ENCODE measurements at regions of chr11 and their contacts with region 1.

Region 1: GRCh38 chr11:66438504-66439466 is at the start of gene MRPL11:
- DNase-seq: peak; percentile 74 to 86
- ATAC-seq: peak; percentile 100
- H3K4me3 ChIP-seq: peak within 1 kb of the TSS; percentile 91 to 95 (median 92)
- H3K27ac ChIP-seq: peak within 1 kb of the TSS; percentile 81 to 97 (median 84)
- H3K4me1 ChIP-seq: peaks cover 5 to 14% of the 10 kb centered on the region in 2 donors
- H3K27me3 ChIP-seq: no peaks in the 10 kb centered on the region
- CTCF ChIP-seq: peak; percentile 35 to 70 (median 57)
- POLR2A ChIP-seq: no peak
- total RNA-seq, gene MRPL11: 35.1 to 64.1 (median 52.5) TPM

Region 2: DNA sequence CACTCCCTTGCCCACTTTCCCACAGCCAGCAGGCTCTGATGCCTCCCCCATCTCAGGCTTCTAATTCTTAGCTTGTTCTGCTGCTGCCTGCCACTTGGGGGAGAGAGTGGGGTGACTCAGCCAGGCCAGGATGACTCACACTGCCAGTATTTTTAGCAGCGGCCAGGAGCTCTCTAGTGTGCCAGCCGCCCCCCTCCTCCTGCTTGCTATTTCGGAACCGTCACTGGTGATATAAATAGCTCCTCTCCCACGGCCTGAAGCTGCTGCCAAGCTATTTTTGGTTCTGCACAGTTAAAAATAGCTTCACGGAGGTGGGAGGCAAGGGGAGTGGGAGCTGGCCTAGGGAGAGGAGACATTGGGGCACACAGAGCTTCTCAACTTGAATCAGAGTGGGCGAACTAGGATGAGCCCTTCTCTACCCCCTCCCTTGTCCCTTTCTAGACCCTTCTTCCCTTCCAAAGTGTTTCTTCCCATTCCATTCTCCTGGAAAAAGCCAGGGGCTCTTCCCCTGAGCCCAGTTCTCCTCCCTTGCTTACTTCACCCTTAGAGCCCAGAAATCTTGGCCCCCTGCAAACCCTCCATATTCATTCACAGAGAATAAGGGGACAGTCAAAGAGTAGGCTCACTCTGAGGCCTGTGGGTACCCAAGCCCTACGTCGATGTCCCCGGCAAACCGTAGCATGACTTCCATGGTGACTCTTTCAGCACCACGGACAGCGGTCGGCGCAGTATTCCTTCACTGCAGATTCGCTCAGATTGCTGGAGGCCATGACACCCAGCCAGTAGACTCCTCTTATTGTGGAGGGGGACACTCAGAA is 20.4 kb before region 1 on chr11:
- in situ Hi-C with region 1: no loop called
- intact Hi-C with region 1: loop called (anchors 1 kb)
- DNase-seq: peak; percentile 91 to 95
- ATAC-seq: peak; percentile 95 to 98
- H3K4me3 ChIP-seq: no peak overlapping the region
- H3K27ac ChIP-seq: peak overlapping the region; percentile 63 to 73 (median 65)
- H3K4me1 ChIP-seq: peaks cover 30 to 31% of the 10 kb centered on the region in 2 donors
- H3K27me3 ChIP-seq: peaks cover 0 to 6% (median 0%) of the 10 kb centered on the region in 3 donors
- CTCF ChIP-seq: peak; percentile 29 to 53 (median 51)
- POLR2A ChIP-seq: no peak

Measured in gastrocnemius medialis (tissue), 4 donors.